Activated CD8-positive, alpha-beta T cell treated with anti-CD3 and anti-CD28 coated beads for 36 hours (primary cell): ENCODE measurements at regions of chrX and their contacts with region 1.

Region 1: GRCh38 chrX:53481816-53482465 is 47.8 kb upstream of the HSD17B10 start:
- DNase-seq: peak; percentile 62
- ATAC-seq: peak; percentile 51
- H3K4me3 Mint-ChIP-seq: no peak overlapping the region
- H3K27ac Mint-ChIP-seq: no peak overlapping the region
- H3K4me1 Mint-ChIP-seq: no peaks in the 10 kb centered on the region
- H3K27me3 Mint-ChIP-seq: peaks cover 2% of the 10 kb centered on the region
- CTCF ChIP-seq: peak; percentile 60

Region 2: DNA sequence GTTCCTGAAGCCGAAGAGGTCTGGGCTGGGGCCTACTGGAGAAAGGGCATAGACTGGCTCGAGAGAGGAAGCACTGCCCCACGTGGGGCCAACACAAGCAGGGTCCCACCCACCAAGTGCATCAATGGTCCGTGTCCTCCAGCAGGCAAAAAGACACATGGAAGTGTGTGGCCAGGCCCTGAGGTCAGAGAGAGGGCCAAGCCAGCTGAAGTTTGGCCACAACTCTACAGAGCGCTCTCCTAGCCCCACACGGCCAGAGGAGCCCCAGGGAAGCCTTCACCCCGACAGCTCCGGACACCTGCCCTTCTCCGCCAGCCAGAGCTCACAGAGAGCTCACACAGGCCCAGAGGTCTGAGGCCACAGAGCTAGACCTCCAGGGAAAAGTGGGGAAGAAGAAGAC is 248.4 kb before region 1 on chrX:
- CTCF ChIA-PET with region 1: no interaction called
- POLR2A ChIA-PET with region 1: no interaction called
- intact Hi-C with region 1: no loop called
- DNase-seq: no peak
- ATAC-seq: no peak
- H3K4me3 Mint-ChIP-seq: no peak overlapping the region
- H3K27ac Mint-ChIP-seq: no peak overlapping the region
- H3K4me1 Mint-ChIP-seq: no peaks in the 10 kb centered on the region
- H3K27me3 Mint-ChIP-seq: no peaks in the 10 kb centered on the region
- CTCF ChIP-seq: no peak

Region 3: DNA sequence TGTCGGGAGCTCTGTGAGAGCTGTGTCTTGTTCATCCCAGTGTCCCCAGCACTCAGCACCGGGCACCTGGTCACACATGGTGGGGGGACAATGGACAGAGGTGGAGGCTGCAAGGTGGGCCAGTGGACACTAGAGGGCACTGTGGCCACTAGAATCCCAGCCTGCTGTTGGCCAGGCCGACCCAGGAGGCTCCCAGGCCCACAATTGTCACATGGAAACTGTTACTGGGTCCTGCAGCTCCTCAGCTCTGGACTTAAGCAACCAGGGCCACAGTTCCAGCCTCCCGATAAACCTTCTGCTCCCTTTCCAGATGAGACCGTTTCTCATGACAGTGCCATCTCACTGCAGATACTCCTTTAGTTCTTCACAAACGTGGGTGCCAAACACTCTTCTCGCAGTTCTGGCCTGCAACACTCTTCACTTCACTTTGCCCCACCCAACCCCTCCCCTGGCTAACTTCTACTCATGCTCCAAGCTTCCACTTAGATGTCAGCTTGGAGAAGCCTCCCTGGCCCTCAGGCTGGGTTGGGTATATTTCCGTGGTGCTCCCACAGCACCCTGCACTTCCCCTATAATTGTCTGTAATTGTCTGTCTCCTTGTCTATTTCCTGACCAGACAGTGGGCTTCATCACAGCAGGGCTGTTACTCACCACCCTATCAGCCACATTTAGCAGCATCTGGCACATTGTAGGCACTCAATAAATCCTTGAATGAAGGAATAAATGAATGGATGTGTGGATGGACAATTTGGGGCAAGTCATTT is 197.1 kb before region 1 on chrX:
- CTCF ChIA-PET with region 1: interaction called, 10 read pairs
- POLR2A ChIA-PET with region 1: no interaction called
- intact Hi-C with region 1: no loop called
- DNase-seq: peak; percentile 61
- ATAC-seq: peak; percentile 74
- H3K4me3 Mint-ChIP-seq: no peak overlapping the region
- H3K27ac Mint-ChIP-seq: no peak overlapping the region
- H3K4me1 Mint-ChIP-seq: peaks cover 23% of the 10 kb centered on the region
- H3K27me3 Mint-ChIP-seq: no peaks in the 10 kb centered on the region
- CTCF ChIP-seq: peak; percentile 54

Region 4: GRCh38 chrX:53395601-53396298 is 86.2 kb before region 1 on chrX:
- CTCF ChIA-PET with region 1: no interaction called
- POLR2A ChIA-PET with region 1: no interaction called
- intact Hi-C with region 1: no loop called
- DNase-seq: no peak
- ATAC-seq: no peak
- H3K4me3 Mint-ChIP-seq: no peak overlapping the region
- H3K27ac Mint-ChIP-seq: peak overlapping the region; percentile 41
- H3K4me1 Mint-ChIP-seq: no peaks in the 10 kb centered on the region
- H3K27me3 Mint-ChIP-seq: no peaks in the 10 kb centered on the region
- CTCF ChIP-seq: no peak

Region 5: DNA sequence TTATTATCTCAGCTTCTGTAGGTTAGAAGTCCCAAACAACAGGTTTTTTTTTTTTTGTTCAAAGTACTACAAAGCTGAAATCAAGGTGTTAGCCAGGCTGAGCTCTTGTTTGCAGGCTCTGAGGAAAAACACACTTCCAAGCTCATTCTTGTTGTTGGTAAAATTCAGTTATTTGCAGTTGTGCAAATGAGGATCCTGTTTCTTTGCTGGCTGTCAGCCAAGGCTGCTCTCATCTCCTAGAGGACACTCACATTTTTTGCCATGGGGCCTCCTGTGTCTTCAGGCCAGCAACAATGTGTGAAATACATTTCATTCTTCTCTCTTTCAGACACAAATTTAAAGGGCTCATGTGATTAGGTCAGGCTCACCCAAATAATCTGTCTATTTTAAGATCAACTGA is 12.5 kb after region 1 on chrX:
- CTCF ChIA-PET with region 1: interaction called, 11 read pairs
- POLR2A ChIA-PET with region 1: no interaction called
- intact Hi-C with region 1: no loop called
- DNase-seq: no peak
- ATAC-seq: no peak
- H3K4me3 Mint-ChIP-seq: no peak overlapping the region
- H3K27ac Mint-ChIP-seq: no peak overlapping the region
- H3K4me1 Mint-ChIP-seq: no peaks in the 10 kb centered on the region
- H3K27me3 Mint-ChIP-seq: peaks cover 2% of the 10 kb centered on the region
- CTCF ChIP-seq: no peak